Endothelial cell of umbilical vein (primary cell): ENCODE measurements at regions of chr15 and their contacts with region 1.

Region 1: GRCh38 chr15:61530779-61531178 is 301.7 kb upstream of the RORA start:
- DNase-seq: peak; percentile 3
- H3K4me3 ChIP-seq: no peak overlapping the region
- H3K27ac ChIP-seq: no peak overlapping the region
- H3K4me1 ChIP-seq: peaks cover 37% of the 10 kb centered on the region
- H3K27me3 ChIP-seq: no peaks in the 10 kb centered on the region
- CTCF ChIP-seq: peak in 1 of 2 donors; percentile 7
- POLR2A ChIP-seq: no peak

Region 2: DNA sequence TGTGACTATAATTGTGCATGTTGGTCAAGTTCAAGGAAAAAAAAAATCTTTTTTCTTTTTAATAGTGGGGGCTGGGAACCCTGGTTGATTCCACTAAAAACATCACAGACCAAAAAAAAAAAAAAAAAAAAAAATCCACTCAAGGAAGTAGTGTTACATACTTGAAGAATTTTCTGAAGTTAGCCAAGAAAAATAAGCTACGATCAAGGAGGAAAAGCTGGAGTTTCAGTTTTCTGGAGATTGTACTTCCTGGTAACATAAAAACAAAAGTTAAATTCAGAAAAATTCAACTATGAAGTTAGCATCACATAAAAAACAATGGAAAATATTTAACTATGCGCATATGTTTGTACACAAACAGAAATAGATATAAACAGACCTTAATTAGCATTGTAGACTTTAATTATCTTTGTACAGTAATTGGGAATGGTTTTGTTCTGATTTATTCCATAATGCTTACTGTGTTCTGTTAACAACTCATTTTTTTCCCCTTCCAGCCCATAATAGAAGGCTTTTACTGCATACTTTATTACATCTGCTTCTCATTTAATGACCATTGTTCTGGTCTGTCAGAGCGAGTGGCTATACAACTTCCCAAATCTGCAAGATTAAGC is 496.0 kb before region 1 on chr15:
- CTCF ChIA-PET with region 1: no interaction called
- POLR2A ChIA-PET with region 1: no interaction called
- dilution Hi-C with region 1: no loop called
- intact Hi-C with region 1: loop called (anchors 2 kb)
- DNase-seq: peak; percentile 92
- H3K4me3 ChIP-seq: peak overlapping the region in 1 of 3 experiments; percentile 52
- H3K27ac ChIP-seq: peak overlapping the region; percentile 95
- H3K4me1 ChIP-seq: peaks cover 61% of the 10 kb centered on the region
- H3K27me3 ChIP-seq: no peaks in the 10 kb centered on the region
- CTCF ChIP-seq: no peak
- POLR2A ChIP-seq: no peak

Region 3: GRCh38 chr15:61169904-61170695 is 360.7 kb before region 1 on chr15:
- CTCF ChIA-PET with region 1: no interaction called
- POLR2A ChIA-PET with region 1: no interaction called
- dilution Hi-C with region 1: no loop called
- intact Hi-C with region 1: loop called (anchors 5 kb)
- DNase-seq: no peak
- H3K4me3 ChIP-seq: no peak overlapping the region
- H3K27ac ChIP-seq: no peak overlapping the region
- H3K4me1 ChIP-seq: peaks cover 13% of the 10 kb centered on the region
- H3K27me3 ChIP-seq: no peaks in the 10 kb centered on the region
- CTCF ChIP-seq: no peak
- POLR2A ChIP-seq: no peak

Region 4: GRCh38 chr15:61227269-61227949 is 303.4 kb before region 1 on chr15:
- CTCF ChIA-PET with region 1: no interaction called
- POLR2A ChIA-PET with region 1: no interaction called
- dilution Hi-C with region 1: no loop called
- intact Hi-C with region 1: loop called (anchors 2 kb)
- DNase-seq: peak; percentile 41
- H3K4me3 ChIP-seq: peak overlapping the region; percentile 53 to 84 (median 72)
- H3K27ac ChIP-seq: no peak overlapping the region
- H3K4me1 ChIP-seq: peaks cover 9% of the 10 kb centered on the region
- H3K27me3 ChIP-seq: peaks cover 25 to 28% of the 10 kb centered on the region in 2 experiments
- CTCF ChIP-seq: no peak
- POLR2A ChIP-seq: no peak

Region 5: DNA sequence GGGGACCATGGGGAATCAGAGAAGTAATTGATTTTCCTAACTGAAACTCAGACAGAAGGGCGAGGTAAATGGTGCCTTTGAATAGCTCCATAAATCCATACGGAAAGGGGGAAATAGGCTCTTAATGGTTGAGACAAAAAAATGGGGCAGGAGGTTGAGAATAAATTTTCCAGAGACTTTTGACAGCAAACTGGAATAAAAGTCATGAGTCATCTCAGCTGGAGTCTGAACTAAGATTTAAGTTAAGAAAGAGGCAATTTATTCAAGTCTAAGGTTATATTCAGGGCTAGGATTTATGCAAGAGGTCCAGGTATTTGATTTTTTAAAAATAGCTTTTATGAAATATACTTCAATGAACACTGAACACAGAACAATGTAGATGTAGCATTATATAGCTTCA is 63.0 kb before region 1 on chr15:
- CTCF ChIA-PET with region 1: no interaction called
- POLR2A ChIA-PET with region 1: no interaction called
- dilution Hi-C with region 1: no loop called
- intact Hi-C with region 1: no loop called
- DNase-seq: no peak
- H3K4me3 ChIP-seq: no peak overlapping the region
- H3K27ac ChIP-seq: no peak overlapping the region
- H3K4me1 ChIP-seq: no peaks in the 10 kb centered on the region
- H3K27me3 ChIP-seq: peaks cover 1 to 4% of the 10 kb centered on the region in 2 experiments
- CTCF ChIP-seq: no peak
- POLR2A ChIP-seq: no peak

Region 6: GRCh38 chr15:61501815-61502389 is 28.9 kb before region 1 on chr15:
- CTCF ChIA-PET with region 1: no interaction called
- POLR2A ChIA-PET with region 1: no interaction called
- dilution Hi-C with region 1: no loop called
- intact Hi-C with region 1: loop called (anchors 2 kb)
- DNase-seq: peak; percentile 45
- H3K4me3 ChIP-seq: no peak overlapping the region
- H3K27ac ChIP-seq: no peak overlapping the region
- H3K4me1 ChIP-seq: peaks cover 11% of the 10 kb centered on the region
- H3K27me3 ChIP-seq: peaks cover 9 to 13% of the 10 kb centered on the region in 2 experiments
- CTCF ChIP-seq: no peak
- POLR2A ChIP-seq: no peak

Region 7: GRCh38 chr15:61549727-61550126 is 18.9 kb after region 1 on chr15:
- CTCF ChIA-PET with region 1: interaction called, 3 read pairs
- POLR2A ChIA-PET with region 1: interaction called, 10 read pairs
- dilution Hi-C with region 1: no loop called
- intact Hi-C with region 1: no loop called
- DNase-seq: no peak
- H3K4me3 ChIP-seq: no peak overlapping the region
- H3K27ac ChIP-seq: no peak overlapping the region
- H3K4me1 ChIP-seq: no peaks in the 10 kb centered on the region
- H3K27me3 ChIP-seq: no peaks in the 10 kb centered on the region
- CTCF ChIP-seq: no peak
- POLR2A ChIP-seq: no peak

Region 8: DNA sequence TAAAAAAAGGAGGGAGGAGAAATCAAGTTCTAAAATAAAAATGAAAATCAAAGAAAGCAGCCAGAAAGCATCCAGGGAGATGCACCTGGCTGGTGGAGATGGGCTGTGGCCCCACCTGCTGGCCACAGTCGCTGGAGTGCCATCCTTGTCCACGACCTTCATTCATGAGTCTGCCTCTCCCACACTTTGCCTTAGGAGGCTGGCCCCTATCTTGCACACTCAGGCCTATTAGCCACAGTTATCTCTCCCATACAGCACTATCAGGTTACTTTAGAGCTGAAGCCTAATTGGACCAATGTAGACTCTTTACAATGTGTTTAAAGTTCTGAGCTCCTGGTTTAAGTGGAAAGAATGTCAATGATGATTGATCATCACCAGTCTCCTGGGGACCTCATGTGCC is 90.4 kb after region 1 on chr15:
- CTCF ChIA-PET with region 1: interaction called, 7 read pairs
- POLR2A ChIA-PET with region 1: no interaction called
- dilution Hi-C with region 1: no loop called
- intact Hi-C with region 1: loop called (anchors 2 kb)
- DNase-seq: peak; percentile 21
- H3K4me3 ChIP-seq: no peak overlapping the region
- H3K27ac ChIP-seq: no peak overlapping the region
- H3K4me1 ChIP-seq: no peaks in the 10 kb centered on the region
- H3K27me3 ChIP-seq: no peaks in the 10 kb centered on the region
- CTCF ChIP-seq: peak; percentile 39 to 69
- POLR2A ChIP-seq: no peak